Psoas muscle (tissue), 8 donors: ENCODE measurements at regions of chr10 and their contacts with region 1.

Region 1: DNA sequence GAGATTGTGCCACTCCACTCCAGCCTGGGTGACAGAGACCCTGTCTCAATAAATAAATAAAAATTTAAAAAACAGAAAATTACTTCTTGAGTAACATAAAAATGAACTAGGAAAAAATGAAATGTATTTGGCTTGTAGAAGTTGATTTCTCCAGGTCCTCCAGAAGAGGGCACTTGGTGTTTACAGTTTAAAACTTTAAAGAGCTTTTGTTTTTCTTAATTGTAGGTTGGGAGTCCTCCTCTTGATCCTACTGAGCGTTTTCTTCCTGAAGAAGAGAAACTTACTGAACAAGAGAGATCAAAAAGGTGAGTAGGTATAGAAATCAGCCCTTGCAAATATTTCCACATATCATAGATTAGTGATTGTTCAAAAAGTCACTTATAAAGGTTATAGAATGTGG is 16.2 kb downstream of the KIFBP start:
- DNase-seq: no peak
- ATAC-seq: peak in 1 of 4 donors; percentile 58
- H3K4me3 ChIP-seq: no peak overlapping the region
- H3K27ac ChIP-seq: no peak overlapping the region
- H3K4me1 ChIP-seq: no peaks in the 10 kb centered on the region
- H3K27me3 ChIP-seq: no peaks in the 10 kb centered on the region
- CTCF ChIP-seq: peak; percentile 50

Region 2: GRCh38 chr10:68955832-68956532 is 48.8 kb before region 1 on chr10 and contains the start of gene DDX21:
- intact Hi-C with region 1: no loop called
- DNase-seq: peak; percentile 90 to 94
- ATAC-seq: peak; percentile 96 to 97 (median 96)
- H3K4me3 ChIP-seq: peak within 1 kb of the TSS; percentile 99
- H3K27ac ChIP-seq: peak within 1 kb of the TSS; percentile 99
- H3K4me1 ChIP-seq: peaks cover 23% of the 10 kb centered on the region
- H3K27me3 ChIP-seq: no peaks in the 10 kb centered on the region
- CTCF ChIP-seq: peak; percentile 54
- total RNA-seq, gene DDX21: 30.8 to 120 (median 85.4) TPM

Region 3: DNA sequence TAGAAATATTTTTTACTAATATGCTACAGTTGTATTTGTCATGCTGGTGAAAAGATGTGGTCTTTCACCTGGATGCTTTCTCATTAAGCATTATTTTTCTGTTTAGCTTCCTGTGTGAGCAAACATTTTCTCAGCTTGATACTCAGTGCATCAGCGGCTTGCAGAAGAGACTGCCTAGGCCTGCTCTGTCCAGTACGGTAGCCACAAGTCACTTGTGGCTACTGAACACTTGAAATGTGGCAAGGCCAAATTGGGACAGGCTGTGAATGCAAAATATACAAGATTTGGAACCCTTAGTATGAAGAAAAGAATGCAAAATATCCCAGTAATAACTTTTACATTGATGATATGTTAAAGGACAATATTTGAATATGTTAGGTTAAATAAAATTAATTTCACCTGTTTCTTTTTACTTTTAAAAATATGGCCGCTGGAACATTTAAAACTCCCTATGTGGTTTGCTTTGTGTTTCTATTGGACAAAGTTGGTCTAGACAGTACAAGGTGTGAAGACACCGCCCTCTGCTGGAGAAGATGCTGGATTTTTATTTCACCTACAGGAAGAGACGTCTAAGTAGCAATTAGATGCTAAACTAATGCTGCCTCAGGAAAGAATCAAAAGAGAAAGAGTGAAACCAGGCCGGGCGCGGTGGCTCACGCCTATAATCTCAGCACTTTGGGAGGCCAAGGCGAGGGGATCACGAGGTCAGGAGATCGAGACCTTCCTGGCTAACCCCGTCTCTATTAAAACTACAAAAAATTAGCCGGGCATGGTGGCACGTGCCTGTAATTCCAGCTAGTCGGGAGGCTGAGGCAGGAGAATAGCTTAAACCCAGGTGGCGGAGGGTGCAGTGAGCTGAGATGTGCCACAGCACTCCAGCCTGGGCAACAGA is 88.4 kb after region 1 on chr10:
- intact Hi-C with region 1: loop called (anchors 2 to 5 kb)
- DNase-seq: peak; percentile 33 to 60
- ATAC-seq: peak; percentile 84 to 95 (median 88)
- H3K4me3 ChIP-seq: peak overlapping the region; percentile 8
- H3K27ac ChIP-seq: peak overlapping the region; percentile 5
- H3K4me1 ChIP-seq: peaks cover 5% of the 10 kb centered on the region
- H3K27me3 ChIP-seq: no peaks in the 10 kb centered on the region
- CTCF ChIP-seq: peak; percentile 78

Region 4: DNA sequence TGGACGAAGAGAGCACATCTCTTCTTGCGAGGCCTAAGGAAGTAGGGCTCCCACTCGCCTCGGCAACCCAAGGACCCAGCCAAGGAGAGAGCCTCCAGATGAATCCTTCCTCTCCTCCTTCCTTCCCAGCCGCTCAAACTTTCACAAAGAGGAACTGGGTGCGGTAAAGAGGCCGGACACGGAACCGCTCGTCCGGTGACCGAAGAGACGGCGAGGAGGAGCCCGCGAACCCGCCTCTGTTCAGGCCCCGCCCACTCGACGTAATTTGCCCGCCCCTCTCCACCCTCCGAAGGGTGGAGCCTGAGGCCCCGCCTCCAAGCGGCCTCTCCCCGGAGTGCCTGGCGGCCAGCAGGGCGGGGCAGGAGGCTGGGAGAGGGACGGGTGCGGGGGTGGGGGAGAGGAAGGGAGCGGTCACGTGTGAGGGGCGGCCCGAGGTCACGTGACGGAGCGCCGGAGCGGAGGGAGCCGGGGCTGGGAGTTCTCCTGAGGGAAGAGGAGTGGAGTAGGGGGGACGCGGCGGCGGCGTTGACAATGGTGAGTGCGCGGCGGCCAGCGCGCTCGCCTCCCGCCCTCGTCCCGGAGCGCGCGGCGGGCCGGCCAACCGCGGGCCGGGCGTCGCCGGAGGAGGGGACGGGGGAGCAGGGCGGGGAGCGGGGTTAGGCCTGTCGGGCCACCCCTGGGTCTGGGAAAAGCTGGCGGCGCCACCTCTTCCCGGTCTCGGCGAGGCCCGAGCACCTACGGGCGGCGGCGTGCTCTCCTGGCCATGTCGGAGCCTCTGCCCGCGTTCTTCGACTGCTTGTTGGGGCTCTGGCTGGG is 119.1 kb after region 1 on chr10 and contains the start of gene VPS26A:
- intact Hi-C with region 1: loop called in 1 of 2 experiments (anchors 10 kb)
- DNase-seq: peak; percentile 99 to 100
- ATAC-seq: peak; percentile 97 to 100 (median 98)
- H3K4me3 ChIP-seq: peak within 1 kb of the TSS; percentile 93
- H3K27ac ChIP-seq: peak within 1 kb of the TSS; percentile 98
- H3K4me1 ChIP-seq: peaks cover 15% of the 10 kb centered on the region
- H3K27me3 ChIP-seq: no peaks in the 10 kb centered on the region
- CTCF ChIP-seq: no peak
- total RNA-seq, gene VPS26A: 25.2 to 41.1 (median 39.2) TPM

Region 5: DNA sequence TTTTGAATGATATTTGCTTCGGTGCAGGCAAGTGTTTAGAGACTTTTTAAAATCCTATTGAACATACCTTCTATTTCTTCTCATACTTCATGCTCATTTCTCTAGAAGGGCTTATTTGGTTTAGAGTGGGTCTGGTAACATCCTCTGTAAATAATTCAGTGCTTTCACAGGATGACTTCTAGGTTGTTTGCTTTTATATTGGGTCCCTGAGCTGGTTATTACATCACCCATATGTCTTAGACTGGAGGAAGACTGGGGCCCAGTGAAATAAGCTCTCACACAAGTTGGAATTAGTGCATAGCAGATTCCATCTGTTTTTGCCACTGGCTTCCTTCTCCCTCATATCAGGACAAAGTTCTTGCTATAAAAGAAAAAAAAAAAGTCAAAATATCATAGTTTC is 181.7 kb after region 1 on chr10:
- intact Hi-C with region 1: no loop called
- DNase-seq: no peak
- ATAC-seq: no peak
- H3K4me3 ChIP-seq: no peak overlapping the region
- H3K27ac ChIP-seq: no peak overlapping the region
- H3K4me1 ChIP-seq: peaks cover 20% of the 10 kb centered on the region
- H3K27me3 ChIP-seq: no peaks in the 10 kb centered on the region
- CTCF ChIP-seq: no peak